Heart right ventricle (tissue), 16 donors: ENCODE measurements at regions of chr4 and their contacts with region 1.

Region 1: GRCh38 chr4:169270810-169271691 is at the start of gene SH3RF1:
- DNase-seq: peak; percentile 91
- ATAC-seq: peak; percentile 95 to 98 (median 96)
- H3K4me3 ChIP-seq: peak within 1 kb of the TSS; percentile 81 to 99 (median 94)
- H3K27ac ChIP-seq: peak within 1 kb of the TSS; percentile 80 to 97 (median 94)
- H3K4me1 ChIP-seq: peaks cover 2 to 54% (median 41%) of the 10 kb centered on the region in 9 donors
- H3K27me3 ChIP-seq: peaks cover 0 to 5% (median 0%) of the 10 kb centered on the region in 7 donors
- CTCF ChIP-seq: peak in 8 of 9 donors; percentile 20 to 59 (median 40)
- total RNA-seq, gene SH3RF1: 7.0 to 11.7 (median 9.9) TPM

Region 2: GRCh38 chr4:169024762-169025161 is 246.3 kb before region 1 on chr4:
- intact Hi-C with region 1: loop called in 3 of 10 experiments (anchors 5 to 10 kb)
- DNase-seq: peak in 1 of 2 donors; percentile 34
- ATAC-seq: peak; percentile 72 to 92 (median 86)
- H3K4me3 ChIP-seq: no peak overlapping the region
- H3K27ac ChIP-seq: no peak overlapping the region
- H3K4me1 ChIP-seq: peaks cover 0 to 6% (median 0%) of the 10 kb centered on the region in 9 donors
- H3K27me3 ChIP-seq: no peaks in the 10 kb centered on the region
- CTCF ChIP-seq: peak; percentile 27 to 77 (median 64)

Region 3: DNA sequence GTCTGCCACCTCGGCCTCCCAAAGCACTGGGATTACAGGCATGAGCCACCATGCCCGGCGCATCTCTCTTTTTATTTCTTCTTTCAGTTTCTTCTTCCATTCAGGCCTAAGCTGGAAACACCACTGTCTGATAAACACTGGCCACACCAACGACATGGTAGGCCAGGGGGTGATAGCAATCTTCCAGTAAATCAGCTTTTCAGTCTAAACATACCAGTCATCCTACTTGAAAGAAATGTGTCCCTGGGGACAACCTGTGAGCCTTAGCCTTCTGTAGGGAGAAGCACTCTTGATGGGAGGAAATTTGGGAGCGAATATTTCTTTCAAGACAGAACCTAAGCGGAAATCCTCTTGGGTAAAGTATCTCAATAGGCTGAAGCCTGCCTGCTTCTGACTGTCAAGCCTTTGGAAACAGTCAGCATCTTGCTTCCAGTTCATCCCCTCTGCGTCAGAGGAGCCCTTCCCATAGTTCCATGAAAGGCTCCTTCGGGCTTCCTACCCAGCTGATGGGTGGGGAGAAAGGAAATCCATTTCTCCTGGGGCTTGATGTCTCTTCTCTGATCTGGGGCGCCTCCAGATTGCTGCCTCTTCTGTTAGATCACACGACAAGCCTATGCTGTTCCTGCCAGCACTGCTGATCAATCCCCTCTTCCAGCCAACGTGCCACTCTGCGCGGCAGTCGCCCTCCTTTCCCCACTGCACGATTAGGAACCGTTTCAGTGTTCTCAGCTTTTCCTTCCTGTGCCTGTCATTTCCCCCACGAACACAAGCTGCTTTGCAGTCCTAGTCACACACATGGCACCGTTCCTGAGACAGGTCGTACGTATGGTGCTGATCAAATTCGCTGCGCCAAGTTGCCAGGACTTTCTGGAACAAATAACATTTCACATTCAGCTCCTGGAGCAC is 211.5 kb before region 1 on chr4:
- intact Hi-C with region 1: loop called in 1 of 10 experiments (anchors 5 kb)
- DNase-seq: peak; percentile 20 to 75
- ATAC-seq: peak; percentile 75 to 92 (median 83)
- H3K4me3 ChIP-seq: peak overlapping the region in 4 of 10 donors; percentile 3 to 26 (median 10)
- H3K27ac ChIP-seq: peak overlapping the region; percentile 77 to 91 (median 86)
- H3K4me1 ChIP-seq: peaks cover 18 to 57% (median 45%) of the 10 kb centered on the region in 9 donors
- H3K27me3 ChIP-seq: no peaks in the 10 kb centered on the region
- CTCF ChIP-seq: no peak

Region 4: DNA sequence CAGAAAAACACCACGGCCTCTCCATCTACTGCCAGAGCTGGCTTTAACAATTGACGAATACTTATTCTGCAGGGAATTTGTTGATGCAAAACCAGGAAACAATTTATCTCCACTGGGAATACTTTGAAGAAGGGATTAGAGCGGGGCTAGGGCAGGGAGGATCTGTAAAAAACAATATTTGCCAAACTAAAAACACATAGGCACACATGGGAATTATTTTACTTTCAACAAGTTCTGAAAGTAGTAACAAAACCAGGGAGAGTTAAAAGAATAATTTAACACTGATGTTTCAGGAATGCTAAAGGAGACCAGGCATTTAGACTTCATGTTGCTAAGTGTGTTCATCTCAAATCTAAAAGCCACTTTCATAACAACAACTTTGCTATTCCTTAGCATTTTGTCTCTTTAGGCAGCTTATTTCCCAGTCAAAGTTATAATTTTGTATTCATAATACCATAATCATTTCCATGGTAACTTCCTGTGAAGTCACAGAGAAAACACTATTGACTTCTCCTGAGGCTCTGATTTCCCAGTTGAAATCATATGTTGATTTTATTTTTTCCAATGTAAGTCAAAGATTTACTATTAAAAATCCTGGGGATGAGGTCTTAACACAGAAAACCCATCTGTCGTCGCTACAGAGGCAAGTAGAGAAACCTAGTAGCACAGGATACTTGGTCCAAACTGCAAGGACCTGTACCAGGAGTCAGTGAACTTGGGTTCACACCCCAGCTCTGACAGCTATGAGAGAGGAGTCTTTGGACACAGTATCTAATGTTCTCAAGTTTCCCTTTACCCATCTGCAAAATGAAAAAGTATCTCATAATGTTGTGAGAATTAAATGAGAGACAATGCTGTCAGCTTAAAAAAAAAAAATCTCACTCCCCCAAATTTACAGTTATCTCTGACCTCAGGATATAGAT is 69.6 kb before region 1 on chr4:
- intact Hi-C with region 1: loop called in 1 of 10 experiments (anchors 10 kb)
- DNase-seq: no peak
- ATAC-seq: peak in 6 of 8 donors; percentile 43 to 79 (median 70)
- H3K4me3 ChIP-seq: no peak overlapping the region
- H3K27ac ChIP-seq: peak overlapping the region in 9 of 10 donors; percentile 4 to 63 (median 52)
- H3K4me1 ChIP-seq: peaks cover 0 to 54% (median 25%) of the 10 kb centered on the region in 9 donors
- H3K27me3 ChIP-seq: no peaks in the 10 kb centered on the region
- CTCF ChIP-seq: no peak

Region 5: GRCh38 chr4:169293343-169294176 is 22.5 kb after region 1 on chr4:
- intact Hi-C with region 1: no loop called
- DNase-seq: no peak
- ATAC-seq: peak in 1 of 8 donors; percentile 16
- H3K4me3 ChIP-seq: no peak overlapping the region
- H3K27ac ChIP-seq: no peak overlapping the region
- H3K4me1 ChIP-seq: peaks cover 0 to 20% (median 0%) of the 10 kb centered on the region in 9 donors
- H3K27me3 ChIP-seq: no peaks in the 10 kb centered on the region
- CTCF ChIP-seq: no peak